ENCODE measurements at regions of chr5 and their contacts with region 1.

Region 1: GRCh38 chr5:81233080-81233634 is at the start of gene CKMT2:
- DNase-seq: peak; percentile 94
- total RNA-seq, gene CKMT2: 1,231 TPM

Region 2: GRCh38 chr5:81070571-81071255 is 162.4 kb before region 1 on chr5:
- intact Hi-C with region 1: no loop called
- DNase-seq: no peak

Region 3: DNA sequence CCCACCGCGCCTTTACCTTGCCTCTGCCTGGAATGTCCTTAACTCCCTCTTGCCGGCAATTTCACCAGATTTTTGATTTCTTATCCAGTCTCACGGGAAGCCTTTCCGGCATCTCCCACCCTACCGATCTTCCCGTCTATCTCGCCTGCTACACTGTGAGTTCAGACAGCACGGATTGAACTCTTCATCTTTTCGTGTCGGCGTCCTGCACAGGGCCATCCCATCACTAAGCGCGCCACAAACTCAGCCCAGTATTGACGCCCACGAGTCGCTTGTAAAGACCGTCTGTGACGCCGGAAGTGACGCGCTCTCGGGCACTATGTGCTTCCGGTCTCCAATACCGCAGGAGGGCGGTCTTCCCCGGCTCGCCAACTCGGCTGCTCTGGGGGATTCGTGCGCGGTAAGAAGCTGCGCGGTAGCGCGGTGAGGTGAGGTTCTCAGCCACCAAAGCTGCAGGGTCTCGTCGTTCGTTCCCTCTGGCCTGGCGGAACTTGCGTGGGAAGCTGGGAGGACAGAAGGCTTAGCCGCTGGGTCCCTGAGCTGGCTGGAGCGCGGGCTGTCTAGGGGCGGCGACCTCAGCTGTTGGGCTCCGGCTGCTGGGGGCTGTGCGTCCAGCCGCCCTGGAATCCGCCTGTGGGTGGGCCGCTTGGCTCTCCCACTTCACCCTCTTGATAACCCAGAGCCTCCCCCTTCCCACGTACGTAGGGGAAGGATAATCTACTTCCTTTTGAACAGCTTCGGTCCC is 68.3 kb after region 1 on chr5 and contains the start of gene ZCCHC9:
- intact Hi-C with region 1: loop called (anchors 5 kb)
- DNase-seq: peak; percentile 97
- total RNA-seq, gene ZCCHC9: 10.9 TPM

Region 4: DNA sequence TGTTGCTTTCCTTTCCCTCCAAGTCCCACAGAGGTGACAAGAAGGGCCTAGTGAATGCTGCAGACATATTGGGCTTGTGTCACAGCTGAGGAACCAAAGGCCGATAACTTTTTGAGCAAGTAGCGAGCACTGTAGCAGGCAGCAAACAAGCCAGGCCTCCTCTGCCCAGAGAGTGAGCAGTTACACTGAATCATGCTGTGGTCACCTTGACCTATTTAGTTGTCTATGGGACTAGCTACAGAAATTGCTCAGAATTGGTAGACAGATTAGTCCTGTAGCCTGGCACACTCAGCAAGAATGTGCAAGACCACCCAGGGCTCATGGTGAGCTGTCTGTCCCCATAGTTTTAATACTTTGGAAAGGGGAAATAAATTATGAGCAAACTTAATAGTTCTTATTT is 93.4 kb after region 1 on chr5:
- intact Hi-C with region 1: no loop called
- DNase-seq: no peak